T-cell (primary cell): ENCODE measurements at regions of chr10 and their contacts with region 1.

Region 1: DNA sequence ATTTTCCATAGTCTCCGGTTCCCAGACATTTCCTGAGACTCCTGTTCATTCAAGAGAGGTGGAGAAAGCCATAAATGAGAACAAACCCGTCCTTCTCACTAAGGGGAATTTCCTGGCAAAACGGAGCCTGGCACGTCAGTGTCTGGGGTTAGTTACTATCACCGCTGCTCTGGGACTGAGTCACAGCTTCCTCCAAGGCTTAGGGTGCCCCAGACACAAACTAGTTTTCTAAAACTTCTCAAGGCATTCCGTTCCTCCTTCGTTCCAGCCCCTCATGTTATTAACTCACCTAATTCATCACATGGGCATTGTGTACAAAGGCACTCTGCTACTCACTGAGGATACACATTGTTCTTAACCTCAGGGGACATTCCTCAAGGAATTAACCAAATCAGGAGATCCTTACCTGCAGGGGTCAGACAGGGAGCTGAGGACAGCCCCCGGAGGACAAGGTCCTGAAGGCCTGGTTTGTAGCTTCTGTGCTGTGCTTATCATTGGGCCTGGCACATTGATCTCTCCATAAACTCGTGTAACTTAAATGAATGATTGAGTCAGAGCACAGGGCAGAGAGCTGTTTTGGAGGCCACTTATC is 103.0 kb upstream of the KLF6 start:
- DNase-seq: peak in 34 of 35 experiments; percentile 21 to 88 (median 48)
- ATAC-seq: peak; percentile 61 to 78 (median 70)
- H3K4me3 ChIP-seq: peak overlapping the region in 1 of 2 donors; percentile 11
- H3K4me3 Mint-ChIP-seq: peak overlapping the region in 2 of 3 donors; percentile 21 to 53
- H3K27ac ChIP-seq: peak overlapping the region; percentile 88
- H3K27ac Mint-ChIP-seq: peak overlapping the region; percentile 87 to 96
- H3K4me1 ChIP-seq: peaks cover 6 to 34% of the 10 kb centered on the region in 2 experiments
- H3K4me1 Mint-ChIP-seq: peaks cover 13 to 56% (median 37%) of the 10 kb centered on the region in 3 donors
- H3K27me3 ChIP-seq: no peaks in the 10 kb centered on the region
- H3K27me3 Mint-ChIP-seq: peaks cover 0 to 1% of the 10 kb centered on the region in 2 donors

Region 2: DNA sequence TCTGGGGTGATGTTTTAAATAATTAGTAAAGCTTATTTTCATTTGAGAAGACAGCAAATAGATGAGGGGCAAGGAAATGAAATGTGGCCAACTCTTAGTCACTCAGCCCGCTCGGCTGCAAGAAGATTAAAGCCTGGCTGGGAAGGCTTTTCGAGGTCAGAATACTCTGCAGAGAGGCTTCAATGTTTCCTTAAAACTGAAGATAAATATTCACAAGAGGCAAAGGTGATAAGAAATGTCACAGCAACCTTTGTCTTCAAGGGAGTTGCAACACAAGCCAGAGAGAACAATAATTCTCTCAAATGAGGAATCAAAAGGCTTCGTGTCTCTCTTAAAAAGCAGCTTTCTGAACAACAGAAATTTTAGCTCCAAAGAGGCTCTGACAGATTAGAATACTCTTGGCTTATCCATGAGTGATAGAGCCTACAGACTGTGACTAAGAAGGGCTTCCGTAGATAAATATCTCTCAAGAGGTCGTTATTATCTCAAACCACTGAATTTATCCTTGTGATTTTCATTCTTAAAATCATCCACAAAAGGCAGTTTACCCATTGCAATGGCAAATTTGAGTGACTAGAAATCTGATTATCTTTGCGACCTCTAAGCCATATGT is 195.5 kb before region 1 on chr10:
- CTCF ChIA-PET with region 1: no interaction called
- POLR2A ChIA-PET with region 1: no interaction called
- DNase-seq: no peak
- ATAC-seq: no peak
- H3K4me3 ChIP-seq: no peak overlapping the region
- H3K4me3 Mint-ChIP-seq: no peak overlapping the region
- H3K27ac ChIP-seq: no peak overlapping the region
- H3K27ac Mint-ChIP-seq: no peak overlapping the region
- H3K4me1 ChIP-seq: no peaks in the 10 kb centered on the region
- H3K4me1 Mint-ChIP-seq: peaks cover 0 to 6% (median 2%) of the 10 kb centered on the region in 3 donors
- H3K27me3 ChIP-seq: no peaks in the 10 kb centered on the region
- H3K27me3 Mint-ChIP-seq: peaks cover 0 to 1% of the 10 kb centered on the region in 2 donors

Region 3: DNA sequence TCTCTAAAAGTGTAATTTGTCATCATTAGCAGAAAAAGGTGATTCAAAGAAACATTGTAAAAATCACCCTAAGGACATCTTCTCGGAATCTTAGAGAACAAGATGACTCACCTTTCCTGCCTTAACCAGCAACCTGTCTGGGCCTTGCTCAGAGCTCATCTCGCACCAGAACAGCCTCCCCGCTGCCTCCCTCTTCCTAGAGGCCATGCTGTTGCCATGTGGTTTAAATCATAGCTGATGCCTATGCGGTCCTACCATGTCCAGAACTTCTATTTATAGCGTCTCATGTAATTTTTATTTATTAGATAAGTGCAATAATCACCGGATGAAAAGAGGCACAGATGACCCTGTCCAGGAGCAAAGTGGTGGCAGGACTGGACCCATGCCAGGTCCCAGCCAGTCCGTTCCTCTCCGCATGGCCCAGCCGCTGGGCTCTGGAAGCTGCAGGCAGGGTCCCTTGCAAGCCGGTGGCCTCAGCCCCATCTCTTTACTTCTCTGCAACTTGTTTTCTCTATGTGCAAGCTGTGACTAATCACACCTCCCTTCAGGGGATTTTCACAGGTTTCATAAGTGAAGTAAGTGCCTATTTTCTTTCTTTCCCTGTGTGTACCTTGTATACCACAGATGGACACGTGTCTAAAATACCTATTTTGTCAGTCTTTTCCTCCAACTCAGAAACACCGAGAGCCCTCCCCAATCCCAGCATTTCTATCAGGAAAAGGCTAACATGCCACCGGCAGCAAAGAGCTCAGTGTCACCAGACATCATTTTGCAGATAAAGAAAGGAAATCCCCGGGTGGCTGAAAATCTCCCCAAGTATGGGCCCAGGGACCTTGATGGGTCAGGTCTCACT is 130.1 kb before region 1 on chr10:
- CTCF ChIA-PET with region 1: interaction called in 1 of 2 experiments, 11 read pairs
- POLR2A ChIA-PET with region 1: interaction called in 1 of 2 experiments, 5 read pairs
- DNase-seq: peak in 19 of 35 experiments; percentile 28 to 76 (median 43)
- ATAC-seq: peak; percentile 77 to 87 (median 85)
- H3K4me3 ChIP-seq: peak overlapping the region in 1 of 2 donors; percentile 16
- H3K4me3 Mint-ChIP-seq: peak overlapping the region; percentile 37 to 64 (median 59)
- H3K27ac ChIP-seq: peak overlapping the region; percentile 97
- H3K27ac Mint-ChIP-seq: peak overlapping the region; percentile 96 to 98
- H3K4me1 ChIP-seq: peaks cover 0 to 50% of the 10 kb centered on the region in 2 experiments
- H3K4me1 Mint-ChIP-seq: peaks cover 31 to 78% (median 67%) of the 10 kb centered on the region in 3 donors
- H3K27me3 ChIP-seq: no peaks in the 10 kb centered on the region
- H3K27me3 Mint-ChIP-seq: peaks cover 0 to 4% of the 10 kb centered on the region in 2 donors

Region 4: DNA sequence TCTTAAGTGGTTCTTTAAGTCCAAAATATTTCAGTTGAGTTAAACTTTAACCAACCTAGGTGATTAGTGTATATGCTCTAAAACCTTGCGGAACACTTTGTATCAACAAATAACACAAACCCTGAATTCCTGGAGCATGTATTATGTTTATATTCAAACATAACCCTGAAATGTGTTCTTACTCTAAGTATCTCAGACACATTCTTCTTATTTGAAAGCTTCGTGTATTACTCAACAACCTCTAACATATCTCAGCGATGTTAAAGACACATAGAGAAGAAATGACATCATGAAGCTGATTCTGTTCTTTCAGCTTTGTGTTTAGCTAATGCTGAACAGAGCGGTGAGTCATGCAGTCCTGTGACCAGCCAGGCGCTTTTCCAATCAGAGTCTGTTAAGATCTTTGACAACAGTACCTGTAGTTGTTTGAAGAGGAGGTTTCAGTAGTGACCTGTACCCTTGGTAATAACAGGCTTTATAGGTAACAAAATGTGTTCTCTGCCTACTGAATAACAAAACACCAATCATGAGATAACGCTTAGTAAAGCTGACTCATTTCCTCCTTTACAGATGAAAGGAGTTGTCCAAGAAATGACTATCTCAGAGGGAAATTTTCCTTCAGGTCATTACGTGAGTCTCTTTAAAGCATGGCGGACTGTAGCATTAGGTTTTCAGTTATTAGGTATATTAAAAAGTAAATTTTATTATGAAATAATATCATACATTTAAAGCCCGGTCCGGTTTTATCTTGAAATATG is 35.7 kb before region 1 on chr10:
- CTCF ChIA-PET with region 1: interaction called in 1 of 2 experiments, 3 read pairs
- POLR2A ChIA-PET with region 1: interaction called in 1 of 2 experiments, 10 read pairs
- DNase-seq: peak in 31 of 35 experiments; percentile 20 to 79 (median 45)
- ATAC-seq: peak; percentile 81 to 95 (median 88)
- H3K4me3 ChIP-seq: no peak overlapping the region
- H3K4me3 Mint-ChIP-seq: peak overlapping the region in 1 of 3 donors; percentile 42
- H3K27ac ChIP-seq: peak overlapping the region; percentile 85
- H3K27ac Mint-ChIP-seq: peak overlapping the region; percentile 87 to 90
- H3K4me1 ChIP-seq: peaks cover 0 to 20% of the 10 kb centered on the region in 2 experiments
- H3K4me1 Mint-ChIP-seq: peaks cover 19 to 36% (median 28%) of the 10 kb centered on the region in 3 donors
- H3K27me3 ChIP-seq: no peaks in the 10 kb centered on the region
- H3K27me3 Mint-ChIP-seq: no peaks in the 10 kb centered on the region

Region 5: GRCh38 chr10:3873728-3874461 is 14.1 kb before region 1 on chr10:
- CTCF ChIA-PET with region 1: interaction called in 1 of 2 experiments, 3 read pairs
- POLR2A ChIA-PET with region 1: interaction called in 1 of 2 experiments, 24 read pairs
- DNase-seq: peak in 9 of 35 experiments; percentile 13 to 87 (median 25)
- ATAC-seq: peak in 3 of 4 experiments; percentile 24 to 70 (median 55)
- H3K4me3 ChIP-seq: no peak overlapping the region
- H3K4me3 Mint-ChIP-seq: peak overlapping the region in 2 of 3 donors; percentile 9 to 25
- H3K27ac ChIP-seq: peak overlapping the region; percentile 98
- H3K27ac Mint-ChIP-seq: peak overlapping the region; percentile 81 to 99
- H3K4me1 ChIP-seq: peaks cover 36 to 42% of the 10 kb centered on the region in 2 experiments
- H3K4me1 Mint-ChIP-seq: peaks cover 57 to 70% (median 62%) of the 10 kb centered on the region in 3 donors
- H3K27me3 ChIP-seq: no peaks in the 10 kb centered on the region
- H3K27me3 Mint-ChIP-seq: no peaks in the 10 kb centered on the region